Mucosa of descending colon (tissue), 3 donors: ENCODE measurements at regions of chr5 and their contacts with region 1.

Region 1: GRCh38 chr5:42021923-42022322 is 96.8 kb downstream of the FBXO4 start:
- DNase-seq: no peak
- ATAC-seq: no peak
- H3K4me3 ChIP-seq: no peak overlapping the region
- H3K4me1 ChIP-seq: no peaks in the 10 kb centered on the region
- CTCF ChIP-seq: no peak

Region 2: DNA sequence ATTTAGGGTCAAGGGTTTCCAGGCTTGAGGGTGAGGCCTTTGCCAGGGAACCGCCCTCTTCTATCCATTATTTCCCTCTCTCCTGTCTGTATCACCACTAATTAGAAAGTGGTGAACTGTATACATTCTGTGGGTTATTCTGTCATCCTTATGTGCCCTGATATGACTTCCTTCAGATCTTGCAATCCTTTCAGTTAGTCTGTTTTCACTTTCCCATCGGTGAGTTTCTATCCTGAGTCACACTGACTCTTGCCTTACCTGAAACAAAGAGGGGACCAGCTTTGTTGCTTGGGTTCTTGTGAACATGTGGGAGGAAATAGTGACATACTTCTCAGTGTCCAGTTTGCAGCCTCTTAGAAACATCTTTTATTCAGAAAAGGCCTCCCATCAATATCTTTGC is 195.9 kb after region 1 on chr5:
- intact Hi-C with region 1: loop called in 1 of 2 experiments (anchors 2 kb)
- DNase-seq: no peak
- ATAC-seq: no peak
- H3K4me3 ChIP-seq: no peak overlapping the region
- H3K4me1 ChIP-seq: no peaks in the 10 kb centered on the region
- CTCF ChIP-seq: no peak